Activated B cell treated with CpG ODN at 0.5 μM for 24 hours (primary cell): ENCODE measurements at regions of chr11 and their contacts with region 1.

Region 1: DNA sequence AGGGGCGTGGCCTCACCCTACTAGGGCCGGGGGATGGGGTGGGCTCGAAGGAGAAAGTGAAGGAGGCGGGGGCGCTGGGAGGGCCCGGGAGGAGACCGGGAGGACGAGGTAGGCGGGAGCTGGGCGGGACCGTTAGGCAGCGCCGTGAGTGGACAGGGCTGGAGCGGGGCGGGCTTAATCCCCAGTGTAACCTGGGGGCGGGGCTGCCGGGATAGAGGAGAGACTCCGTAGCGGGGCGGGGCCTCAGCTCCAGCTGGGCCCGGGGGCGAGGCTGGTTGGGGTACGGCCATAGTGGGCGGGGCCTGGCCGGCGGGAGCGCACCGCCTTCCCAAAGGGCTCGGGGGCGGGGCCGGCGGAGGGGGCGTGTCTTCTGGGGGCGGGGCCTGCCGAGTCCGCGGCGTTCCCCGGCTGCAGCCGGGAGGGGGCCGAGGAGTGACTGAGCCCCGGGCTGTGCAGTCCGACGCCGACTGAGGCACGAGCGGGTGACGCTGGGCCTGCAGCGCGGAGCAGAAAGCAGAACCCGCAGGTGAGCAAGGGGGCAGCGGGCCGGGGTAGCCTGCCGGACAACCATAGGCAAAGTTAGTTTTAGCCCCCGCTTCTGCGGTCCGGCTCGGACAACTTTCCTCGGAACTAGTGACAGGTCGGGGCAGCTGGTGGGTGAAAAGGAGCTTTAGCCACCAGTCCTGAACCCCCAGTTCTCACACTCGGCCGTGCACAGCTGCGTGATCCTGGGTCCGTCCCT is at the start of gene CD82:
- DNase-seq: peak; percentile 98
- ATAC-seq: peak; percentile 83
- H3K4me3 Mint-ChIP-seq: peak within 1 kb of the TSS; percentile 92
- H3K27ac Mint-ChIP-seq: peak within 1 kb of the TSS; percentile 80
- H3K4me1 Mint-ChIP-seq: peaks cover 72% of the 10 kb centered on the region
- H3K27me3 Mint-ChIP-seq: no peaks in the 10 kb centered on the region
- CTCF ChIP-seq: no peak
- total RNA-seq, gene CD82: 728 and 770 TPM in 2 replicates

Region 2: GRCh38 chr11:43311791-43312607 is 1253.4 kb before region 1 on chr11 and contains the start of gene API5:
- CTCF ChIA-PET with region 1: no interaction called
- POLR2A ChIA-PET with region 1: no interaction called
- intact Hi-C with region 1: loop called (anchors 10 kb)
- DNase-seq: peak; percentile 88
- ATAC-seq: peak; percentile 98
- H3K4me3 Mint-ChIP-seq: peak within 1 kb of the TSS; percentile 98
- H3K27ac Mint-ChIP-seq: peak within 1 kb of the TSS; percentile 89
- H3K4me1 Mint-ChIP-seq: peaks cover 47% of the 10 kb centered on the region
- H3K27me3 Mint-ChIP-seq: no peaks in the 10 kb centered on the region
- CTCF ChIP-seq: no peak
- total RNA-seq, gene API5: 122 and 123 TPM in 2 replicates

Region 3: DNA sequence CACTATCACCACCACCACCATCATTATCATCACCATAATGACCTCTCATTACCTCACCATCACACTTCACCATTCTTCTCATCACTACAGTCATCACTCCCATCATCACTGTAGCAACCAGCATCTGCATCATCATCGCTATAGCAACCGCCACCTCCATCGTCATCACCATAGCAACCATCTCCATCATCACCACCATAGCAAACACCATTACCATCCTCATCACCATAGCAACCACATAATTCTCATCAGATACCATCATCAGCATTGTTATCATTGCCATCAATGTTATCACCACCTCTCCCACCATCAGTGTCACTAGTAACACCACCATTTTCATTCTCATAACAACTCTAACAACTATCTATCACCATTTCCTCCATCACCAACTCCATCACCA is 23.0 kb before region 1 on chr11:
- CTCF ChIA-PET with region 1: no interaction called
- POLR2A ChIA-PET with region 1: no interaction called
- intact Hi-C with region 1: no loop called
- DNase-seq: no peak
- ATAC-seq: no peak
- H3K4me3 Mint-ChIP-seq: no peak overlapping the region
- H3K27ac Mint-ChIP-seq: no peak overlapping the region
- H3K4me1 Mint-ChIP-seq: peaks cover 3% of the 10 kb centered on the region
- H3K27me3 Mint-ChIP-seq: peaks cover 3% of the 10 kb centered on the region
- CTCF ChIP-seq: no peak

Region 4: GRCh38 chr11:44596525-44597276 is 31.3 kb after region 1 on chr11:
- CTCF ChIA-PET with region 1: interaction called, 10 read pairs
- POLR2A ChIA-PET with region 1: interaction called, 485 read pairs
- intact Hi-C with region 1: loop called (anchors 1 kb)
- DNase-seq: peak; percentile 69
- ATAC-seq: peak; percentile 30
- H3K4me3 Mint-ChIP-seq: peak overlapping the region; percentile 82
- H3K27ac Mint-ChIP-seq: peak overlapping the region; percentile 94
- H3K4me1 Mint-ChIP-seq: peaks cover 95% of the 10 kb centered on the region
- H3K27me3 Mint-ChIP-seq: no peaks in the 10 kb centered on the region
- CTCF ChIP-seq: no peak

Region 5: DNA sequence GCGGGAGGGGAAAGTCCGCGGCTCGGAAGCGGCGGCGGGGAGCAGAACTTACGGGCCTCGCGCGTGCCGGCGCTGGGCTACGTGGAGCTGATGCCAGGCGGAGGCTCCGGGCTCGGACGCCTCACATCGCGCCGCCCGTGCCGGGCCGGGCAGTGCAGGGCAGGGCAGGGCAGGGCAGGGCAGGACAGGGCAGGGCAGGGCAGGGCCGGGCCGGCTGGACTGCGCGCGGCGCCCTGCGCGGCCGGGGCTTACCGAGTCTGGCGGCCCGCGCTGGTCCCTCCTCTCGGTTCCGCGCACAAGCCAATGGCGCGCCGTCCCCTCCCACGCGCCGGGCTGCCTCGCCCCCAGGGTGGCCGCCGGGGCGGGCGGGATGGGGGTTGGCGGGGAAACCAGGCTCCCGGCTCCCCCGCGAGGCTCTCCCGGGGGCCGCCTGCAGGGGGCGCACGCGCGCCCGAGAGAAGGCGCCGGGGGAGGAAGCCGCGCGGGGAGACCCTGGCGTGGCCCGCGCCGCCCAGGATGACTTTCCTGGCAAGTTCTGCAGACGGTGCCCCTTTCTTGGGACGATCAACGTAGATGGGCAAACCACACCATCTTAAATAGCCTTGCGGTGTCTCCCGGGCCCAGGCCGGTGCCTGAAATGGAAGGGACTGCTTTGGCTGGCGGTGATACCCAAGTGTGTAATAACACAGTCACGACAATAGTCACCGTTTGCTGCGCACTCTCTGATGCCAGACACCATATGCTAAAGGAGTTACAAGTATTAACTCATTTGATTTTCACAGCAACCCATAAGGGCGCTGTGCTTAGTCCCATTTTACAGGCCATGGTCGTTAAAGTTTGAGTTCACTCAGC is 385.5 kb after region 1 on chr11 and contains the start of gene TP53I11:
- CTCF ChIA-PET with region 1: no interaction called
- POLR2A ChIA-PET with region 1: no interaction called
- intact Hi-C with region 1: loop called (anchors 2 kb)
- DNase-seq: peak; percentile 74
- ATAC-seq: peak; percentile 76
- H3K4me3 Mint-ChIP-seq: peak within 1 kb of the TSS; percentile 91
- H3K27ac Mint-ChIP-seq: peak within 1 kb of the TSS; percentile 87
- H3K4me1 Mint-ChIP-seq: peaks cover 60% of the 10 kb centered on the region
- H3K27me3 Mint-ChIP-seq: no peaks in the 10 kb centered on the region
- CTCF ChIP-seq: peak; percentile 44
- total RNA-seq, gene TP53I11: 145 and 175 TPM in 2 replicates

Region 6: DNA sequence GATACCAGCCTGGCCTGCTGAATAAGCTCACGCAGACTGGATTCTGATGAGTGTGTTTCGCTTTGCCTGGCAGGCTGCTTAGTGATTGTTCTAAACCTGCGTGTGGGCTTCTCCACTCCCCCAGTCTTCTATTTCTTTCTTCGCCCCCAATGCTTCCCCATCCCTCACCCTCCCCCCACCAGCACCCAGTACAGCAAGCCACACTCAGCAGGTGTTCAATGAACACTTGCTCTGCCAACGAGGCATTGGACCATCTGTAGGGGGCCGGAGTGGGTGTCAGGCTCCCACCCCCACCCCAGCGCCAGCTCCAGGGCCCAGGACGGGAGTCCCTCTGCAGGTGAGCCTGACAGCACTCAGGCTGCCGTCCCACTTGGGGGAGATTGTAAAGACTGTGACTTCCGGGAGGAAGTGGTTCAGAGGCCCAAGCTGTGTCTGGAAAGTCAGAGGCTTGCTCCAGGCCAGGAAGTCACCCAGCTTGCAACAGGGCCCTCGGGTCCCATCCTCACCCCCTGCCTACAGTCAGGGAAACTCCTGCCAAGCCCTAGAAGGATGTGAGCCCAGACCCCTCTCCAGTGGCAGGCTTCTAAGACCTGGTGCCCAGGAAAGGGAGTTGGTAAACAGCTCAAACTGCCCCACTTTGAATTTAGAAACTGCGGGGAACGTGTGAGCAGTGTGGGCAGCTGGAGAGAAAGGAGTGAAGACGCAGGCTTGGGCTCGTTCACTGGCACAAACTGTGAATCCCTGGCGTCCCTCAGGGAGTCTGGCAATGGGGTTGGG is 514.7 kb after region 1 on chr11:
- CTCF ChIA-PET with region 1: no interaction called
- POLR2A ChIA-PET with region 1: no interaction called
- intact Hi-C with region 1: loop called (anchors 5 kb)
- DNase-seq: peak; percentile 45
- ATAC-seq: peak; percentile 71
- H3K4me3 Mint-ChIP-seq: peak overlapping the region; percentile 59
- H3K27ac Mint-ChIP-seq: peak overlapping the region; percentile 84
- H3K4me1 Mint-ChIP-seq: peaks cover 71% of the 10 kb centered on the region
- H3K27me3 Mint-ChIP-seq: no peaks in the 10 kb centered on the region
- CTCF ChIP-seq: no peak

Region 7: GRCh38 chr11:45804761-45805304 is 1239.5 kb after region 1 on chr11 and contains the start of gene SLC35C1:
- CTCF ChIA-PET with region 1: no interaction called
- POLR2A ChIA-PET with region 1: no interaction called
- intact Hi-C with region 1: loop called (anchors 10 kb)
- DNase-seq: peak; percentile 95
- ATAC-seq: peak; percentile 96
- H3K4me3 Mint-ChIP-seq: peak within 1 kb of the TSS; percentile 92
- H3K27ac Mint-ChIP-seq: peak within 1 kb of the TSS; percentile 78
- H3K4me1 Mint-ChIP-seq: peaks cover 41% of the 10 kb centered on the region
- H3K27me3 Mint-ChIP-seq: no peaks in the 10 kb centered on the region
- CTCF ChIP-seq: no peak
- total RNA-seq, gene SLC35C1: 8.6 and 8.8 TPM in 2 replicates